Right ventricle myocardium superior (tissue), 1 donor: ENCODE measurements at regions of chr11 and their contacts with region 1.

Region 1: DNA sequence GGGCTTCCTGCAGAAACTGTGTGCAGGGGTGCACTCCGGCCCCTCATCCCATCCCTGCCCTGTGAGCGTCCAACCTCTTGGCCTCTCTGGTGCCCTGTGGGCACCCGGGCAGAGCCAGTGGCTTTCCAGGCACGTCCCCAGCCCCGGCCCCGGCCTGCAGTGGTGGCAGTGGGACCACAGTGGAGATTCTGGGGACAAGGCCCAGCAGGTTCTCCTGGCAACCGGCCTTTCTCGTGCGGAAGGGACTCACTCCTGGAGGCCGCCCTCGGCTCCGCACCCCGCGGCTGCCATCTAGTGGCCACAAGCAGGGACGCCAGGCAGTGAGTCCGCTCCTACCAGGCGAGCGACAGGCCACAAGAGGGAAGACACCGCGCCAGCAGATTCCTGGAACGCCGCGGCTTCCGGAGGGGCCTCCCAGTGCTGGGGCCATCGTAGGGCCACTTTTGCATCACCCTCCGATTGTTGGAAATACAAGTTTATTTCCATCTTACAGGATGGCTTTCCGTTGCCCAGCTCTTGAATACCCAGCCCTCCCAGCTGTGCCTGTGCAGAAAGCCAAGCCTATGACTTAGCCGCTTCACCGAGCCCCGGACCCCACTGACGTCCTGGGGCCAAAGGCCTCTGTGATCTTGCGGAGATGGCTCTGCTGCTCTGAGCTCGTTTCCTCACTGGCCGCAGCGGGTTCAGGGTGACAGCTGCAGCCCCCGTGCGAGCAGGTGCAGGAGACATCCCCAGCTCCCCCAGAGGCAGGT is 357.3 kb downstream of the CTTN start:
- DNase-seq: peak; percentile 87
- ATAC-seq: peak; percentile 99

Region 2: GRCh38 chr11:70467201-70468085 is 288.1 kb before region 1 on chr11:
- intact Hi-C with region 1: loop called (anchors 2 kb)
- DNase-seq: peak; percentile 70
- ATAC-seq: peak; percentile 72